Activated B cell treated with CpG ODN at 0.5 μM for 24 hours (primary cell): ENCODE measurements at regions of chr7 and their contacts with region 1.

Region 1: GRCh38 chr7:138002096-138002827 is 376 bp upstream of the CREB3L2 start:
- DNase-seq: peak; percentile 93
- ATAC-seq: peak; percentile 90
- H3K4me3 Mint-ChIP-seq: peak overlapping the region; percentile 98
- H3K27ac Mint-ChIP-seq: peak overlapping the region; percentile 90
- H3K4me1 Mint-ChIP-seq: peaks cover 37% of the 10 kb centered on the region
- H3K27me3 Mint-ChIP-seq: no peaks in the 10 kb centered on the region
- CTCF ChIP-seq: peak; percentile 94

Region 2: GRCh38 chr7:137703291-137704010 is 298.8 kb before region 1 on chr7:
- CTCF ChIA-PET with region 1: no interaction called
- POLR2A ChIA-PET with region 1: no interaction called
- intact Hi-C with region 1: no loop called
- DNase-seq: no peak
- ATAC-seq: no peak
- H3K4me3 Mint-ChIP-seq: no peak overlapping the region
- H3K27ac Mint-ChIP-seq: no peak overlapping the region
- H3K4me1 Mint-ChIP-seq: no peaks in the 10 kb centered on the region
- H3K27me3 Mint-ChIP-seq: no peaks in the 10 kb centered on the region
- CTCF ChIP-seq: no peak

Region 3: GRCh38 chr7:137934941-137935883 is 67.0 kb before region 1 on chr7:
- CTCF ChIA-PET with region 1: interaction called, 3 read pairs
- POLR2A ChIA-PET with region 1: interaction called, 7 read pairs
- intact Hi-C with region 1: loop called (anchors 1 kb)
- DNase-seq: no peak
- ATAC-seq: peak; percentile 73
- H3K4me3 Mint-ChIP-seq: peak overlapping the region; percentile 78
- H3K27ac Mint-ChIP-seq: peak overlapping the region; percentile 81
- H3K4me1 Mint-ChIP-seq: peaks cover 40% of the 10 kb centered on the region
- H3K27me3 Mint-ChIP-seq: no peaks in the 10 kb centered on the region
- CTCF ChIP-seq: no peak

Region 4: GRCh38 chr7:137985253-137985896 is 16.9 kb before region 1 on chr7:
- CTCF ChIA-PET with region 1: interaction called, 9 read pairs
- POLR2A ChIA-PET with region 1: interaction called, 15 read pairs
- intact Hi-C with region 1: loop called (anchors 1 kb)
- DNase-seq: no peak
- ATAC-seq: peak; percentile 75
- H3K4me3 Mint-ChIP-seq: peak overlapping the region; percentile 47
- H3K27ac Mint-ChIP-seq: no peak overlapping the region
- H3K4me1 Mint-ChIP-seq: peaks cover 27% of the 10 kb centered on the region
- H3K27me3 Mint-ChIP-seq: no peaks in the 10 kb centered on the region
- CTCF ChIP-seq: no peak

Region 5: DNA sequence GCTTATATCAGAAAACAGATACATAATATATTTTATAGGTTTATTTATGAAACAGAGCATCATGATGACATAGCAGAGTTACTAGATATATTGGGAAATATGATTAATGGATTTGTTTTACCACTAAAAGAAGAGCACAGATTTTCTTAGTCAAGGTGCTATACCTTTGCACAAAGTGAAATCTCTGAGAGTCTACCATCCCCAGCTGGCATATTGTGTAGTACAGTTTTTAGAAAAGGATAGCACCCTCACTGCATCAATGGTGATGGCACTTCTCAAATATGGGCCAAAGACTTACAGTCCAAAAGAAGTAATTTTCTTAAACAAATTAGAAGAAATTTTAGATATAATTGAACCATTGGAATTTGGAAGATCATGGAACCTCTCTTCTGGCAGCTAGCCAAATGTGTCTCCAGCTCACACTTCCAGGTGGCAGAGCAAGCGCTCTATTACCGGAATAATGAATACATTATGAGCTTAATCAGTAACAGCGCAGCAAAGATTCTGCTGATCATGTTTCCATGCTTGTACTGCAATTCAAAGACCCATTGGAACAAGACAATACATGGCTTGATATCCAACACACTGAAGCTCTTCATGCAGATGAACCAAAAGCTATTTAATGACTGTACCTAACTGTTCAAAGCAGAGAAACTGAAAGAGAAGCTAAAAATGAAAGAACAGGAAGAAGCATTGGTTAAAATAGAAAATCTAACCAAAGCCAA is 21.5 kb after region 1 on chr7:
- CTCF ChIA-PET with region 1: interaction called, 5 read pairs
- POLR2A ChIA-PET with region 1: interaction called, 3 read pairs
- intact Hi-C with region 1: loop called (anchors 2 kb)
- DNase-seq: no peak
- ATAC-seq: peak; percentile 73
- H3K4me3 Mint-ChIP-seq: peak overlapping the region; percentile 17
- H3K27ac Mint-ChIP-seq: peak overlapping the region; percentile 26
- H3K4me1 Mint-ChIP-seq: peaks cover 52% of the 10 kb centered on the region
- H3K27me3 Mint-ChIP-seq: no peaks in the 10 kb centered on the region
- CTCF ChIP-seq: no peak

Region 6: GRCh38 chr7:138137423-138138171 is 135.3 kb after region 1 on chr7:
- CTCF ChIA-PET with region 1: no interaction called
- POLR2A ChIA-PET with region 1: no interaction called
- intact Hi-C with region 1: no loop called
- DNase-seq: no peak
- ATAC-seq: no peak
- H3K4me3 Mint-ChIP-seq: no peak overlapping the region
- H3K27ac Mint-ChIP-seq: no peak overlapping the region
- H3K4me1 Mint-ChIP-seq: peaks cover 7% of the 10 kb centered on the region
- H3K27me3 Mint-ChIP-seq: no peaks in the 10 kb centered on the region
- CTCF ChIP-seq: no peak

Region 7: GRCh38 chr7:138459413-138460175 is 457.3 kb after region 1 on chr7:
- CTCF ChIA-PET with region 1: no interaction called
- POLR2A ChIA-PET with region 1: interaction called, 3 read pairs
- intact Hi-C with region 1: loop called (anchors 1 kb)
- DNase-seq: peak; percentile 96
- ATAC-seq: peak; percentile 88
- H3K4me3 Mint-ChIP-seq: peak overlapping the region; percentile 91
- H3K27ac Mint-ChIP-seq: peak overlapping the region; percentile 86
- H3K4me1 Mint-ChIP-seq: peaks cover 22% of the 10 kb centered on the region
- H3K27me3 Mint-ChIP-seq: no peaks in the 10 kb centered on the region
- CTCF ChIP-seq: no peak

Region 8: GRCh38 chr7:138738551-138739335 is 736.5 kb after region 1 on chr7:
- CTCF ChIA-PET with region 1: no interaction called
- POLR2A ChIA-PET with region 1: no interaction called
- intact Hi-C with region 1: loop called (anchors 5 kb)
- DNase-seq: peak; percentile 38
- ATAC-seq: no peak
- H3K4me3 Mint-ChIP-seq: no peak overlapping the region
- H3K27ac Mint-ChIP-seq: no peak overlapping the region
- H3K4me1 Mint-ChIP-seq: no peaks in the 10 kb centered on the region
- H3K27me3 Mint-ChIP-seq: peaks cover 4% of the 10 kb centered on the region
- CTCF ChIP-seq: peak; percentile 26